Vagina (tissue), 2 donors: ENCODE measurements at regions of chr16 and their contacts with region 1.

Region 1: GRCh38 chr16:352547-353403 is at the start of gene AXIN1:
- DNase-seq: peak; percentile 98 to 99
- H3K4me3 ChIP-seq: peak within 1 kb of the TSS; percentile 65 to 73
- H3K27ac ChIP-seq: peak within 1 kb of the TSS; percentile 76
- H3K4me1 ChIP-seq: peaks cover 27% of the 10 kb centered on the region
- H3K27me3 ChIP-seq: no peaks in the 10 kb centered on the region
- CTCF ChIP-seq: peak in 1 of 3 experiments; percentile 12
- POLR2A ChIP-seq: peak in 1 of 2 donors; percentile 72
- total RNA-seq, gene AXIN1: 16.9 TPM

Region 2: GRCh38 chr16:96935-97381 is 255.8 kb before region 1 on chr16:
- intact Hi-C with region 1: no loop called
- DNase-seq: no peak
- H3K4me3 ChIP-seq: no peak overlapping the region
- H3K27ac ChIP-seq: no peak overlapping the region
- H3K4me1 ChIP-seq: peaks cover 21% of the 10 kb centered on the region
- H3K27me3 ChIP-seq: no peaks in the 10 kb centered on the region
- CTCF ChIP-seq: peak; percentile 94 to 99 (median 99)
- POLR2A ChIP-seq: no peak

Region 3: DNA sequence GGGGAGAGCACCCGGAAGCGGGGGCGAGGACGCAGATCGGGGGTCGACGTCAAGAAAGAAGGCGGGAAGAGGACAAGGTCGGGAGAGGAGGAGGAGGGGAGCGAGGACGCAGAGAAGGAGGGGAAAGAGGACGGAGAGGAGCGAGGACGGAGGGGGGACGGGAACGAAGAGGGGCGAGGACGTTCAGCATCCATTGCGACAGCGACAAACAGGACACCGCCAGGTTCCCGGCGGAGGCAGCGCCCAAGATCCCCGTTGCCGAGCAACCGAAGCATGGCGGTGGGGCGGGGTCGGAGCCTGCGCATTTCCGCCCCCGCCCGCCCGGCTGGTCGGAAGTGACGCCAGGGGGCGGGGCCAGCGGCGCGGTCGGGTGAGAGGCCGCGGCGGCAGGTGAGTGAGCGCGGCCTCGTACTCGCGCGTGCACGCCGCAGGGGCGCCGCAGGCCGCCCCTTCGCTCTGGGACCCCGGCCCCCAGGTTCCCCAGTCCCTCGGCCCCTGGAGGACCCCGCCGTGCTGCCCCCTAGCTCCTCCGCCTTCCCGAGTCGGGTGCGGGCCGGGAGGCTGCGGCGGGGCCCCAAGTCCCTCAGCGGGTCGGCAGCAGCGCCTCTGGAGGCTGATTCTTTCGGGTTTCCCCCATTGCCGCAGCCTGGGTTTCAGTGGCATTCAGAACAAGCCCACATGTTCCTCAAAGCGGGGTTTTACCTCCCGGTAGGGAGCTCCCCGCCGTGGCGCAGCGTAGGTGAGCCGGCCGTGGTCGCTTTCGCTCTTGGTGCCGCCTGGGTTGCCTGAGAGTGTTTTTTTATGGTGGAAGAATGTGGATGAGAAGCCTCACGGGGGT is 118.1 kb before region 1 on chr16 and contains the start of gene FAM234A:
- intact Hi-C with region 1: loop called (anchors 2 kb)
- DNase-seq: peak in 1 of 2 donors; percentile 94
- H3K4me3 ChIP-seq: peak within 1 kb of the TSS; percentile 58 to 89
- H3K27ac ChIP-seq: peak within 1 kb of the TSS; percentile 94
- H3K4me1 ChIP-seq: peaks cover 13% of the 10 kb centered on the region
- H3K27me3 ChIP-seq: no peaks in the 10 kb centered on the region
- CTCF ChIP-seq: no peak
- POLR2A ChIP-seq: peak; percentile 89 to 96
- total RNA-seq, gene FAM234A: 23.3 TPM